ENCODE measurements at regions of chr6 and their contacts with region 1.

Region 1: DNA sequence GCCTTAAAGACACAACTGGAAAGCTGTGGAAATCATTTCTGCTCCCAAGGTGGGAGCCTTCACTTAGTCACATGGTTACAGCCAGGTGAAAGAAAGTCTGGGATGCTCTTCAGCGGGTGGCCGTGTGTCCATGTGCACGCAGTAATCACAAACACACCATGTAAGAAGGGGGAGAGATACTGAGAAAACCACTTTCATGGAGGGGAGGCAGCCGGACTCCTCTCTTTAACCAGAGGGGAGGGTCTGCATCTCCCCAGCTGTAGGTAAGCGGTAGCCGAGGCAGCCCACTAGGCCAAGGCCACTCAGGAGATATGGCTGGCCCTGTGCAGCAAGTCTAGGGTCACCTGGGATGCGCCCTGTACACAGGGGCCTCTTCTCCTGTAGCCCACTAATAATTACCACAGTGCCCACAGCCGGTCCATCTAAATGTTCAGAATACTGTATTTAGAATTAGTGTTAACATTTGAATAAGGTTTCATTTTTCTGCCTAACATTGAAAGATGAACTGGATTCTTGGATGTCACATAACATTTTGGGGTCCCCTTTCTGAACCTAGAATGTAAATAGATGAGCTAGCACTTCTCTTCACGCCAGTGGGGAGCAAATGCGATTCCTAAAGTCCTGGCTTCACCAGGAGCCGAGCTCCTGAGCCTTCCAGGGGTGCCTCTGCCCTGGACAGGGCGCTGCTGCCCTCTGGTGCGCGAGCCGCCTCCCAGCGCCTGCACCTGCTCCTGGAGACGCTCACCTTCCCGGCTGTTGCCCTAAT is 15.9 kb downstream of the GPR31 start:
- DNase-seq: peak; percentile 30
- ATAC-seq: peak; percentile 94
- H3K4me3 ChIP-seq: no peak overlapping the region
- H3K27ac ChIP-seq: no peak overlapping the region
- H3K4me1 ChIP-seq: no peaks in the 10 kb centered on the region
- H3K27me3 ChIP-seq: peaks cover 9% of the 10 kb centered on the region
- CTCF ChIP-seq: peak; percentile 98

Region 2: GRCh38 chr6:166775180-166776081 is 366.4 kb before region 1 on chr6:
- CTCF ChIA-PET with region 1: no interaction called
- POLR2A ChIA-PET with region 1: no interaction called
- in situ Hi-C with region 1: no loop called
- intact Hi-C with region 1: loop called (anchors 5 kb)
- DNase-seq: peak; percentile 47
- ATAC-seq: peak; percentile 68; the same call in 1 of the 2 replicates
- H3K4me3 ChIP-seq: peak overlapping the region in 1 of 2 experiments; percentile 0; a peak in 1 of 4 replicates
- H3K27ac ChIP-seq: no peak overlapping the region
- H3K4me1 ChIP-seq: peaks cover 10% of the 10 kb centered on the region
- H3K27me3 ChIP-seq: peaks cover 13% of the 10 kb centered on the region; the same call in 1 of the 2 replicates
- CTCF ChIP-seq: peak; percentile 98

Region 3: GRCh38 chr6:166999145-166999883 is 142.5 kb before region 1 on chr6 and contains the start of gene CEP43:
- CTCF ChIA-PET with region 1: no interaction called
- POLR2A ChIA-PET with region 1: no interaction called
- in situ Hi-C with region 1: no loop called
- intact Hi-C with region 1: loop called (anchors 5 kb)
- DNase-seq: peak; percentile 78
- ATAC-seq: peak; percentile 97
- H3K4me3 ChIP-seq: peak within 1 kb of the TSS; percentile 88 to 89
- H3K27ac ChIP-seq: peak within 1 kb of the TSS; percentile 94
- H3K4me1 ChIP-seq: peaks cover 18% of the 10 kb centered on the region
- H3K27me3 ChIP-seq: no peaks in the 10 kb centered on the region
- CTCF ChIP-seq: no peak
- total RNA-seq, gene CEP43: 35.4 TPM

Region 4: DNA sequence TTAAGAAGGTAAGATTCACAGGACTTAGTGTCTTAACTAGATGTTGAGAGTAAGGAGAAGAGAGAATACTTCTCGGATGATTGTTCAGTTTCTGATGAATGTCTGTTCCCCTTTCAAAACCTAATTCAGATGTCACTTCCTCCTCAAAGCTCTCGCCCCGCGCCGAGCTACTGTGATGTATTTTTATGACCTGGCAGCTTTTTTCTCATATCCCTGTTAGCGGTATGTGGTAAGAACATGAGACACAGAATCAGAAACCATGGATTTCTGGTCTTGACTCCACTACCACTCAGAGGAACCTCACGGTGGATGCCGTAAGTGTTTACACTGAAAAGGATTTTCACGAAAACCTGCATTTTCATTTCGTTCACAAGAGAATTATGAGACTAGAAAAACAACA is 94.3 kb before region 1 on chr6:
- CTCF ChIA-PET with region 1: interaction called, 3 read pairs
- POLR2A ChIA-PET with region 1: no interaction called
- in situ Hi-C with region 1: no loop called
- intact Hi-C with region 1: loop called (anchors 5 kb)
- DNase-seq: no peak
- ATAC-seq: no peak
- H3K4me3 ChIP-seq: no peak overlapping the region
- H3K27ac ChIP-seq: no peak overlapping the region
- H3K4me1 ChIP-seq: no peaks in the 10 kb centered on the region
- H3K27me3 ChIP-seq: no peaks in the 10 kb centered on the region
- CTCF ChIP-seq: no peak

Region 5: GRCh38 chr6:167872538-167873210 is 730.8 kb after region 1 on chr6:
- CTCF ChIA-PET with region 1: no interaction called
- POLR2A ChIA-PET with region 1: no interaction called
- in situ Hi-C with region 1: no loop called
- intact Hi-C with region 1: no loop called
- DNase-seq: no peak
- ATAC-seq: no peak
- H3K4me3 ChIP-seq: no peak overlapping the region
- H3K27ac ChIP-seq: no peak overlapping the region
- H3K4me1 ChIP-seq: no peaks in the 10 kb centered on the region
- H3K27me3 ChIP-seq: no peaks in the 10 kb centered on the region
- CTCF ChIP-seq: no peak

Measured in Panc1 (cell line).